ENCODE measurements at regions of chr7 and their contacts with region 1.

Region 1: GRCh38 chr7:105268511-105269392 is 120.0 kb downstream of the SRPK2 start:
- DNase-seq: peak; percentile 68
- H3K4me3 Mint-ChIP-seq: peak overlapping the region; percentile 83
- H3K27ac Mint-ChIP-seq: peak overlapping the region; percentile 67
- H3K4me1 Mint-ChIP-seq: peaks cover 19% of the 10 kb centered on the region
- H3K27me3 Mint-ChIP-seq: no peaks in the 10 kb centered on the region

Region 2: DNA sequence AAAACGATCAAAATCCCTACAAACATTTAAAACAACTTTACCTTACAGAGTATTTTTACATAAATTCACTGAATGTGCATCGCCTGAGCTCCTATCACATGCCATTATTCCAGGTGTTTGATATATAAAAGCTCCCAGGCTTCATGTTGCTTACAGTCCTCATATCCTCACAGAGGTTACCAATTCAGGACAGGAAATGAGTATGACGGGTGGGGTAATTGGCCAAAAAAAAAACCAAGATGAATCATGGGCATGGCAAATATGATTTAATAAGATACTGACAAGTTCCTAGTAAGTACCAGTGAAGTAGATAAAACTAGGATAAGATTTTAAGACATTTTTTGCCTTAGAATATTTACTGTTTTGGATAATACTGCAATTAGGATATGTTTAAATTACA is 118.9 kb before region 1 on chr7:
- intact Hi-C with region 1: loop called (anchors 10 kb)
- DNase-seq: no peak
- H3K4me3 Mint-ChIP-seq: no peak overlapping the region
- H3K27ac Mint-ChIP-seq: no peak overlapping the region
- H3K4me1 Mint-ChIP-seq: peaks cover 6% of the 10 kb centered on the region
- H3K27me3 Mint-ChIP-seq: no peaks in the 10 kb centered on the region

Region 3: GRCh38 chr7:105173586-105173985 is 95.2 kb before region 1 on chr7:
- intact Hi-C with region 1: no loop called
- DNase-seq: no peak
- H3K4me3 Mint-ChIP-seq: no peak overlapping the region
- H3K27ac Mint-ChIP-seq: no peak overlapping the region
- H3K4me1 Mint-ChIP-seq: peaks cover 5% of the 10 kb centered on the region
- H3K27me3 Mint-ChIP-seq: no peaks in the 10 kb centered on the region

Region 4: GRCh38 chr7:105209870-105210269 is 58.9 kb before region 1 on chr7:
- intact Hi-C with region 1: loop called (anchors 5 kb)
- DNase-seq: peak; percentile 68
- H3K4me3 Mint-ChIP-seq: no peak overlapping the region
- H3K27ac Mint-ChIP-seq: no peak overlapping the region
- H3K4me1 Mint-ChIP-seq: peaks cover 49% of the 10 kb centered on the region
- H3K27me3 Mint-ChIP-seq: no peaks in the 10 kb centered on the region

Region 5: GRCh38 chr7:105309235-105310169 is 40.8 kb after region 1 on chr7:
- intact Hi-C with region 1: loop called (anchors 5 kb)
- DNase-seq: no peak
- H3K4me3 Mint-ChIP-seq: no peak overlapping the region
- H3K27ac Mint-ChIP-seq: no peak overlapping the region
- H3K4me1 Mint-ChIP-seq: peaks cover 46% of the 10 kb centered on the region
- H3K27me3 Mint-ChIP-seq: no peaks in the 10 kb centered on the region

Region 6: GRCh38 chr7:105429746-105430612 is 161.2 kb after region 1 on chr7:
- intact Hi-C with region 1: loop called (anchors 10 kb)
- DNase-seq: peak; percentile 83
- H3K4me3 Mint-ChIP-seq: no peak overlapping the region
- H3K27ac Mint-ChIP-seq: no peak overlapping the region
- H3K4me1 Mint-ChIP-seq: peaks cover 6% of the 10 kb centered on the region
- H3K27me3 Mint-ChIP-seq: no peaks in the 10 kb centered on the region

Region 7: DNA sequence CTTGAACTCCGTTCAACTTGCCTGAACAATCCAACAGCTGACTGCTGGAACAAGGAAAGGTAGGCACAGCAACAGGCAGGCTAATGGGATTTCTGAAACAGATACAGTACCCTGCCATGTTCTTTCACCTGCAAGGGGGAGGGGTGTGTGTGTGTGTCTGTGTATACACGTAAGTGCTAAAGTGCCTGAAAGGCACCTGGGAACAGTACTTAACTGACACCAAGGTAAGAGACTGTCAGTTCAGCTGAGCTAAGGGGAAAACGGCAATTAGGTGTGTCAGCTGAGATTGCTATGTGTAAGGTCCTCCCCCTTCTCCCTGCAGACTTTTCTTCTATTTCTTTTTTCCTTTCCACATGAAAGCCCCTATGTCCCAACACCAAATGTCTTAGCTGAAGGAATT is 989.0 kb after region 1 on chr7:
- intact Hi-C with region 1: no loop called
- DNase-seq: peak; percentile 50
- H3K4me3 Mint-ChIP-seq: no peak overlapping the region
- H3K27ac Mint-ChIP-seq: no peak overlapping the region
- H3K4me1 Mint-ChIP-seq: peaks cover 49% of the 10 kb centered on the region
- H3K27me3 Mint-ChIP-seq: no peaks in the 10 kb centered on the region